CD8-positive, alpha-beta T cell (primary cell): ENCODE measurements at regions of chr1 and their contacts with region 1.

Region 1: DNA sequence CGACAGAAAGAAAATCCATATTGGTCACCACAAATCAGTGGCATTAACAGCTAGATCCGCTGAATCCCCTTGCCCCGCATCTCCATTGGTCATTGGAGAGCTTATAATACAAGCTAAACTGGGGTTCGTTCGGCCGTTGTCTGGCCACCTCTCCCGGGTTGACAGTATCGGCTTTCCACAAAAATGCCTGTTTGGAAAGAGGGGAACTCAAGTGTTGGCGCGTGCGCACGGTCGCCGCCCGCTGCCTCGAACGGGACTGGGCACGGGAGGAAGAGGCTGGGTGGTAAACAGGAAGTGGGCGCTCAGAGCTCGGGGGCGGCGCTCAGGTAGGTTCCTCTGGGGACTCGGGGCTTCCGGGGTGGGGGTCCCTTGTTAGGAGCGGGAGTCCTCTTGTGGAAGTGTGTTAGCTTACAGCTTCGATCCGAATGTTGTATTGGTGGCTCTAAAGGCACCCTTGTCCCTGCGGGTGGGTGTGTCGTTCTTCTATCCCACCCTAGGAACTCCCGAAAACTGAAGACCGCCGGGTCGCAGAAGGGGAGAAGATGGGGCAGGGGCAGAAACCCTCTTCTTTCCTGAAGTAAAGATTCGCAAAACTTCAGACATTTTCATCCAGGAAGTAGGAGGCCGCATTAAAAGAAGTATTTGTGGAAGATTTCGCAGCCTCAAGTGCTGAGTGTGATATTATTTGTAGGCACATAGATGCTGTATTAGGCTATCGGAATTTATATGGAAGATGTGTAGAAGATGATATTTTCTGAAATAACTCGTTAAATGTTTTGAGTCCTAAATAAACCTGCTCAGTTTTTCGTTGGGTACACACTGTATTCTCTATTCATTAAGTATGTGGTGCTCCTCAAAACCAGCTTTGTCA is 962 bp downstream of the BROX start:
- DNase-seq: peak; percentile 87 to 98 (median 94)
- ATAC-seq: peak; percentile 75
- H3K4me3 ChIP-seq: peak overlapping the region; percentile 90 to 94
- H3K4me3 Mint-ChIP-seq: peak overlapping the region; percentile 96
- H3K27ac ChIP-seq: peak overlapping the region; percentile 93 to 99
- H3K27ac Mint-ChIP-seq: peak overlapping the region; percentile 100
- H3K4me1 ChIP-seq: peaks cover 22% of the 10 kb centered on the region
- H3K4me1 Mint-ChIP-seq: peaks cover 54% of the 10 kb centered on the region
- H3K27me3 ChIP-seq: no peaks in the 10 kb centered on the region
- H3K27me3 Mint-ChIP-seq: no peaks in the 10 kb centered on the region
- CTCF ChIP-seq: no peak

Region 2: DNA sequence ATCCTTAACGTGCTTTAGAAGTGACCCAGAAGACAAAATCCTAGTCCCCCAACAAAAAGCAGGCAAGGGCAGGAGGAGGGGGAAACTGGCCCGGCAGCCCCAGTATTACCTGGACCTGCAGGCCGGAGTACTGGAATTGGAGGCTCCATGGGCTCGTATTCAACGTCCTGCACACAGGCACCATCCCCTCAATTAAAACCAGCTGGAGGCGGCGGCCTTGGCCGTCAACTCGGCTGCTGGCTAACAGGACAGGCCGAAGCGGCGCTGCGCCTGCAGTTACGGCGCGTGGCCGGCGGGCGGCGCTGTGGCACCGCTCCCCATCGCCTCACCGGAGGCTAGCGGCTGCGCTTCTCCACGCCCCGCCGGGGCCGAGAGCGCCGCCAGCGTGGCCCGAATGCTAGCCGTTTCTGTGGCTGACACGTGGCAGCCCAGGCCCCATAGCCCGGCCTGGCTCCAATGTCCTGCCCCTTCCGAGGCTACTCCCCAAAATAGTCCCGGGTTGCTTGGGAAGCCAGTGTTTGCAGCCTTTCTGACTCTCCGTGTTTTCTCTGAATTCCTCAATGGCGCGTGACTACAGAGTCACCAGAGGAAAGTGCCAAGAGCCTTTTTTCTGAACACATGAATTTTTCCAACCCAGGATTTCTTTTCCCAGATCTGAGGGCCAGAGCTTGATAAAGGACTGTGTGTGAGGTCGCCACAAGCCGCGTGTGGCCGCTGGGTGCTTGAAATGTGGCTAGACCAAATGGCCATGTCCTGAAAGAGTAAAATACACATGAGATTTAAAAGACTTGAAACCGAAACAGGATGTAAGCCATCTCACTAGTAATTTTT is 247.9 kb before region 1 on chr1:
- CTCF ChIA-PET with region 1: no interaction called
- POLR2A ChIA-PET with region 1: interaction called, 5 read pairs
- intact Hi-C with region 1: loop called in 1 of 2 experiments (anchors 2 kb)
- DNase-seq: peak; percentile 66 to 89 (median 71)
- ATAC-seq: peak; percentile 94
- H3K4me3 ChIP-seq: peak overlapping the region; percentile 54 to 68
- H3K4me3 Mint-ChIP-seq: peak overlapping the region; percentile 85
- H3K27ac ChIP-seq: peak overlapping the region; percentile 58 to 65
- H3K27ac Mint-ChIP-seq: peak overlapping the region; percentile 93
- H3K4me1 ChIP-seq: peaks cover 6% of the 10 kb centered on the region
- H3K4me1 Mint-ChIP-seq: peaks cover 14% of the 10 kb centered on the region
- H3K27me3 ChIP-seq: no peaks in the 10 kb centered on the region
- H3K27me3 Mint-ChIP-seq: no peaks in the 10 kb centered on the region
- CTCF ChIP-seq: peak; percentile 100

Region 3: GRCh38 chr1:222617367-222617951 is 95.9 kb before region 1 on chr1:
- CTCF ChIA-PET with region 1: no interaction called
- POLR2A ChIA-PET with region 1: interaction called, 6 read pairs
- intact Hi-C with region 1: loop called (anchors 1 kb)
- DNase-seq: peak; percentile 88 to 99 (median 93)
- ATAC-seq: peak; percentile 91
- H3K4me3 ChIP-seq: peak overlapping the region; percentile 67 to 68
- H3K4me3 Mint-ChIP-seq: peak overlapping the region; percentile 93
- H3K27ac ChIP-seq: peak overlapping the region; percentile 83
- H3K27ac Mint-ChIP-seq: peak overlapping the region; percentile 98
- H3K4me1 ChIP-seq: peaks cover 20% of the 10 kb centered on the region
- H3K4me1 Mint-ChIP-seq: peaks cover 31% of the 10 kb centered on the region
- H3K27me3 ChIP-seq: peaks cover 0 to 3% of the 10 kb centered on the region in 2 experiments
- H3K27me3 Mint-ChIP-seq: peaks cover 16% of the 10 kb centered on the region
- CTCF ChIP-seq: no peak

Region 4: GRCh38 chr1:222654849-222655248 is 58.5 kb before region 1 on chr1:
- CTCF ChIA-PET with region 1: interaction called, 3 read pairs
- POLR2A ChIA-PET with region 1: interaction called, 9 read pairs
- intact Hi-C with region 1: loop called (anchors 1 to 2 kb)
- DNase-seq: peak; percentile 53 to 95 (median 71)
- ATAC-seq: peak; percentile 98
- H3K4me3 ChIP-seq: no peak overlapping the region
- H3K4me3 Mint-ChIP-seq: peak overlapping the region; percentile 54
- H3K27ac ChIP-seq: peak overlapping the region; percentile 70 to 89
- H3K27ac Mint-ChIP-seq: peak overlapping the region; percentile 96
- H3K4me1 ChIP-seq: peaks cover 43% of the 10 kb centered on the region
- H3K4me1 Mint-ChIP-seq: peaks cover 61% of the 10 kb centered on the region
- H3K27me3 ChIP-seq: no peaks in the 10 kb centered on the region
- H3K27me3 Mint-ChIP-seq: no peaks in the 10 kb centered on the region
- CTCF ChIP-seq: peak; percentile 40

Region 5: DNA sequence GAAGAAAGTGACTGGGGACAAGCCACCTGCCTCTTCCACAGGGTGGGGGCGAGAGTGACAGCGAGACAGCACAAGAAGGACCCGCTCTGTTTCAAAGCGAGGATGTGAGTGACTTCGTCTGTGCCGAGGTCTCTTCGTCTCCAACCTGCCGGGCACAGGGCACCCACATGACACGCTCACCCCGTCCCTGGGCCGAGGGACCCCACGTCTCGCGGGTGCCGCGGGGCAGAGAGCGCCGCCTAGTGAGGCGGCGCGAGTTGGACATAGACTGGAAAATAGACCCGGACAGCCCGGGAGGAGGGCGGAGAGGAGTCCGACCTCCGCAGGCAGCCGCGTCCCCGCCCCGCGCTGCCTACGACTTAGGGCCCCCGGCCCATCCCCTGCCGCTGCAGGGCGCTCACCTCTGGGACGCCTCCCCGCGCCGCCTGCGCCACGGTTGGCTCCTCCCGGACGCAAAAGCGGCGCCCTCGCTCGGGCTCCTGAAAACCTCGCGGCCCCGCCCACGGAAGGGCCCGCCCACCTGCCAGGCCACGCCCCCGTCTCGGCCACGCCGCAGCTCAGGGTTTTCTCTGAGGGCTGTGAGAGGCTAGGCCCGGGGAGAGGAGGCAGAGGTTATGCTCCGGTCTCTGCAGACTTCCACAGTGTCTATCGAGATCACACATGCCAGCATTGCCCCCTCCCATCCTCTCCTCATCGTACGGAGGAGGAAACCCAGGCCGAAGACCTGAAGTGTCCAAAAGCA is 429.6 kb after region 1 on chr1 and contains the start of gene TLR5:
- CTCF ChIA-PET with region 1: no interaction called
- POLR2A ChIA-PET with region 1: no interaction called
- intact Hi-C with region 1: loop called in 1 of 2 experiments (anchors 2 kb)
- DNase-seq: peak; percentile 75 to 94 (median 90)
- ATAC-seq: peak; percentile 91
- H3K4me3 ChIP-seq: peak within 1 kb of the TSS; percentile 54
- H3K4me3 Mint-ChIP-seq: peak within 1 kb of the TSS; percentile 73
- H3K27ac ChIP-seq: peak within 1 kb of the TSS; percentile 21 to 25
- H3K27ac Mint-ChIP-seq: peak within 1 kb of the TSS; percentile 52
- H3K4me1 ChIP-seq: peaks cover 16% of the 10 kb centered on the region
- H3K4me1 Mint-ChIP-seq: peaks cover 21% of the 10 kb centered on the region
- H3K27me3 ChIP-seq: no peaks in the 10 kb centered on the region
- H3K27me3 Mint-ChIP-seq: no peaks in the 10 kb centered on the region
- CTCF ChIP-seq: peak; percentile 28
- total RNA-seq, gene TLR5: 1.1 to 1.2 TPM